MCF 10A (cell line): ENCODE measurements at regions of chr13 and their contacts with region 1.

Region 1: DNA sequence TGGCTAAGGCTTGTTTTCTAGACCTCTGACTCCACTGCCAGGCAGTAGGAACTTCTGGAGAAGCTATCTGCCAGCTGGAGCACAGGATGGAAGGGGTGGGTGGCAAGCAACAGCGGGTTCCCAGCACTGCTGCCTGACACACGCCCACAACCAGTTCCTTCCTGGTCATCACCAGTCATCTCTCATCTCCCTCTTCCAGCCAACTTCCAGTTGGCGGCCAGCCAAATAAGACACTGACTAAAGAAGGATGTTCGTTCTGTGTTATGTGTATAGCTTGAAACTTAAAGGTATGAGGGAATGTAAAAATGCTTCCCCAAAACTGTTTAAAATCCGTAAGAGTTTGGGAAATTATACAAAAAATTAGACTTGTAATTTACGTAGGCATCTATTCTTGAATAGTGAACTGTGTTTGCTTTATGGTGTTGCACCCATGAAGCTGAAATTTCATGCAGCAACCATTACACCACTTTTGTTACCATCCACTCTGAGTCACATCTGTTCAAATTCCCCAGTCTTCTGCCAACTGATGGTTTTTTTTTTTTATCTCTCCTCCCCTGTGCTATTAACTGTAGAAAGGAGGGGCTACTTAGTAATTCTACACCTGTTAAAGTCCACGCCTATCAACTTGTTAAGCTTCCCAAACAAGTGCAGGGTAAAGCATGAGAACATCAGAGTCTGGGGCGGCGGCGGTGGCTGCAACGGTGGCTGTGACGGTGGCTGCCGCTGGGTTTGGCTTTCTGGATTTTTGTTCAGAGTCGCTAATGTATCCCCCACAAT is 86.2 kb upstream of the FRY start:
- DNase-seq: peak; percentile 97
- H3K4me3 Mint-ChIP-seq: peak overlapping the region; percentile 73
- H3K27ac Mint-ChIP-seq: peak overlapping the region; percentile 86
- H3K4me1 Mint-ChIP-seq: peaks cover 42% of the 10 kb centered on the region
- H3K27me3 Mint-ChIP-seq: no peaks in the 10 kb centered on the region
- CTCF ChIP-seq: no peak

Region 2: DNA sequence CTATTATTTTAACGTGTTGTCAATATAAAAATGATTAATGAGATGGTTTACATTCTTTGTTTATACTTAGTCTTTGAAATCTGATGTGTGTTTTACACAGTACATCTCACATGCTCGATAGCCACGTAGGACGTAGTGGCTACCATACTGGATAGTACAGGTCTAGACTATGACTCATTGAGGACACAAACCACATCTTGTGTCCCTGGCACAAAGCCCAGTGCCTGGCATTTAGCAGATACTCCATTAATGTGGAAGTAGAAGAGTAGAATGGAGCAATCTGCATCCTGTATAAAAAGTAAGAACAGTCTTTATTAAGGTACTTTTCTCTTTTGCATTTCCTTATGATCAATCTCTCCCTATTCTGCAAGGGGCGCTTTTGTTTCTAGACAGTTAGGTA is 37.1 kb after region 1 on chr13:
- CTCF ChIA-PET with region 1: no interaction called
- POLR2A ChIA-PET with region 1: interaction called, 5 read pairs
- intact Hi-C with region 1: loop called (anchors 2 kb)
- DNase-seq: peak; percentile 98
- H3K4me3 Mint-ChIP-seq: no peak overlapping the region
- H3K27ac Mint-ChIP-seq: peak overlapping the region; percentile 55
- H3K4me1 Mint-ChIP-seq: peaks cover 30% of the 10 kb centered on the region
- H3K27me3 Mint-ChIP-seq: no peaks in the 10 kb centered on the region
- CTCF ChIP-seq: no peak

Region 3: GRCh38 chr13:32310134-32310706 is 364.8 kb after region 1 on chr13:
- CTCF ChIA-PET with region 1: no interaction called
- POLR2A ChIA-PET with region 1: interaction called, 4 read pairs
- intact Hi-C with region 1: loop called (anchors 1 kb)
- DNase-seq: peak; percentile 72
- H3K4me3 Mint-ChIP-seq: no peak overlapping the region
- H3K27ac Mint-ChIP-seq: no peak overlapping the region
- H3K4me1 Mint-ChIP-seq: no peaks in the 10 kb centered on the region
- H3K27me3 Mint-ChIP-seq: no peaks in the 10 kb centered on the region
- CTCF ChIP-seq: peak; percentile 54